ENCODE measurements at regions of chr17 and their contacts with region 1.

Region 1: GRCh38 chr17:73998653-73999645 is 204.5 kb upstream of the RPL38 start:
- DNase-seq: peak; percentile 49 to 85
- ATAC-seq: peak; percentile 90 to 98
- H3K4me3 ChIP-seq: no peak overlapping the region
- H3K27ac ChIP-seq: no peak overlapping the region
- H3K4me1 ChIP-seq: no peaks in the 10 kb centered on the region
- CTCF ChIP-seq: peak; percentile 66
- EP300 ChIP-seq: no peak
- POLR2A ChIP-seq: no peak
- RAD21 ChIP-seq: peak; percentile 67 to 75

Region 2: DNA sequence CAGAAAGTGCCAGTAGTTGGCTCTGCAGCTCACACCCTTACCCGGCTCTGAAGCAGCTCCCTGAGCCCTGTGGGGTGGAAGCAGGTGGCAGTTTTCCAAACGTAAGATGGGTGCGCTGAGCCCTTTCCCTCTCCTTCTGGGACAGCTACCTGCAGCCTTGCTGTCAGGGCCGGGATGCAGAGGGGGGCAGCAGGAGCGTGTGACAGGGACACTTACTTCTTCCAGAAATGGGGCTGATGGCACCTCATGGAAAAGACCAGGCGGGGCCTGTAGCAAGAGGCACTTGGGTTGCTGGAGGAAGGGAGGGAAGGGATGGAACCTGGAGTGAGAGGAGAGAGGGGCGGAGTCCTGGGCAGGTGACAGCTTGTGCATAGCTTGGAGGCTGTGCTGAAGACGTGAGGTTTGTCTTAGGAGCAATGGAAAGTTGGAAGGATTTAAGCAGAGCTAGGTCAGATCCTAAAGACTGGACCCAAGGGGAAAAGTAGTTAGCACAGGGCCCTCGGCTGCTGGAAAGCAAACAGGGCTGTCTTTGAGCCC is 12.2 kb before region 1 on chr17:
- CTCF ChIA-PET with region 1: interaction called, 21 read pairs
- POLR2A ChIA-PET with region 1: interaction called, 9 read pairs
- DNase-seq: no peak
- ATAC-seq: peak in 1 of 2 experiments; percentile 17; a peak in 1 of 6 replicates
- H3K4me3 ChIP-seq: no peak overlapping the region
- H3K27ac ChIP-seq: no peak overlapping the region
- H3K4me1 ChIP-seq: no peaks in the 10 kb centered on the region
- CTCF ChIP-seq: no peak
- EP300 ChIP-seq: no peak
- POLR2A ChIP-seq: no peak
- RAD21 ChIP-seq: no peak